Psoas muscle (tissue), 8 donors: ENCODE measurements at regions of chr20 and their contacts with region 1.

Region 1: GRCh38 chr20:49344975-49345374 is 67.1 kb upstream of the ZNFX1 start:
- DNase-seq: peak; percentile 67 to 82
- ATAC-seq: peak; percentile 84 to 90 (median 87)
- H3K4me3 ChIP-seq: peak overlapping the region; percentile 32
- H3K27ac ChIP-seq: peak overlapping the region; percentile 89
- H3K4me1 ChIP-seq: peaks cover 33% of the 10 kb centered on the region
- H3K27me3 ChIP-seq: no peaks in the 10 kb centered on the region
- CTCF ChIP-seq: no peak

Region 2: DNA sequence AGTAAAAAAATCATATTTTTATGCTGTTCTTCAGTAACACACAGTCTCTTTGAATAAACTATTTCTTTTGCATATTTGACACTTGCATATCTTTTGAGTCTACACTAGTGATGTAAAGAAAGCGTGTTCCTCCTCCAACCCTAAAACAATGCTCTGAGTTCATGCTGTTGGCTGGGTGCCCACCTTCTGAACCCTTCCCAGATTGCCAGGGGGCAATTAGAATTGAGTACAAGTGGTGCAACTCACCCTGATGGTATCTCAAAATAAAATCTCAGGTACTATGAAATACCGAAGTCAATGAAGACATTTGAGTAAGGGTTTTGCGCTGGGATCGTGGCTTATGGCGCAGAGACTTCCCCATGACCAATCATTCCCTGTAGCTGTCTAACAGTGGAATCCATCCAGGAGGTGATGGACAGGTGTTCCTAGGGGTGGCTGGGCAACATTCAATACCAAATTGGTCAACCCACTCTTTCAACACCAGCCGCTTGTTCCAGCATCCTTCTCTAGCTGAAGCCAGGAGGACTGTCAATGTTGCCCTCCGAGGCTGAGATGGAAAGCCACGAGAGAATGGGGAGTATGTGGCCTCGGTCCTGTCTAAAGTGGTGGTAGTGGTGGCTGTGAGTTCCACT is 27.2 kb after region 1 on chr20:
- intact Hi-C with region 1: no loop called
- DNase-seq: peak in 1 of 2 donors; percentile 28
- ATAC-seq: peak; percentile 44 to 95 (median 70)
- H3K4me3 ChIP-seq: no peak overlapping the region
- H3K27ac ChIP-seq: no peak overlapping the region
- H3K4me1 ChIP-seq: no peaks in the 10 kb centered on the region
- H3K27me3 ChIP-seq: no peaks in the 10 kb centered on the region
- CTCF ChIP-seq: no peak

Region 3: GRCh38 chr20:49384437-49385088 is 39.6 kb after region 1 on chr20:
- intact Hi-C with region 1: loop called in 1 of 2 experiments (anchors 5 kb)
- DNase-seq: peak; percentile 79 to 82
- ATAC-seq: peak in 3 of 4 donors; percentile 44 to 63 (median 53)
- H3K4me3 ChIP-seq: no peak overlapping the region
- H3K27ac ChIP-seq: no peak overlapping the region
- H3K4me1 ChIP-seq: peaks cover 26% of the 10 kb centered on the region
- H3K27me3 ChIP-seq: no peaks in the 10 kb centered on the region
- CTCF ChIP-seq: peak; percentile 58

Region 4: GRCh38 chr20:49641683-49642656 is 297.0 kb after region 1 on chr20:
- intact Hi-C with region 1: no loop called
- DNase-seq: no peak
- ATAC-seq: peak in 1 of 4 donors; percentile 25
- H3K4me3 ChIP-seq: no peak overlapping the region
- H3K27ac ChIP-seq: peak overlapping the region; percentile 48
- H3K4me1 ChIP-seq: peaks cover 20% of the 10 kb centered on the region
- H3K27me3 ChIP-seq: no peaks in the 10 kb centered on the region
- CTCF ChIP-seq: no peak